ENCODE measurements at regions of chr10 and their contacts with region 1.

Region 1: DNA sequence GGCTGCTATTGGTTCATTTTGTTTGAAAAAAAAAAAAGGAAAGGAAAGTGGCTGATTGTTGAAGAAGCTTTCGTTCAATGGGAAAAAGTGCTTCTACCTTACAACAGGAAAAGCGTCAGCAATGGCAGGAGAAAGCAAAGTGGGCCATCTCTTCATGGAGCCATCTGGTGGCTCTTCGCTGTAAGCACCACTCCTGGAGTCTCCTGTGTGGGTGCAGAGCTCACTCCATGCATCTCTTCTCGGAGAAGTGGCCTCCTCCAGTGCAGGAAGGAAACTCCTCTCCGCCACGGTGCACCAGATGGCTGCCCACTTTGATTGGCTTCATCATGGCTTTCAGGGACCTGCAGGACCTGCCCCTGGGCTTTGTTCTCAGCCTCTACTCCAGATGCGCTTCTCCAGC is 250.9 kb downstream of the PTEN start:
- DNase-seq: no peak
- H3K4me3 Mint-ChIP-seq: no peak overlapping the region
- H3K27ac Mint-ChIP-seq: no peak overlapping the region
- H3K4me1 Mint-ChIP-seq: peaks cover 32% of the 10 kb centered on the region
- H3K27me3 Mint-ChIP-seq: peaks cover 7% of the 10 kb centered on the region

Region 2: GRCh38 chr10:88064608-88065382 is 49.6 kb before region 1 on chr10:
- intact Hi-C with region 1: loop called (anchors 1 kb)
- DNase-seq: no peak
- H3K4me3 Mint-ChIP-seq: no peak overlapping the region
- H3K27ac Mint-ChIP-seq: peak overlapping the region; percentile 18
- H3K4me1 Mint-ChIP-seq: peaks cover 39% of the 10 kb centered on the region
- H3K27me3 Mint-ChIP-seq: peaks cover 11% of the 10 kb centered on the region

Region 3: GRCh38 chr10:88091490-88092105 is 22.8 kb before region 1 on chr10:
- intact Hi-C with region 1: loop called (anchors 1 kb)
- DNase-seq: peak; percentile 71
- H3K4me3 Mint-ChIP-seq: no peak overlapping the region
- H3K27ac Mint-ChIP-seq: no peak overlapping the region
- H3K4me1 Mint-ChIP-seq: peaks cover 34% of the 10 kb centered on the region
- H3K27me3 Mint-ChIP-seq: peaks cover 56% of the 10 kb centered on the region

Region 4: GRCh38 chr10:88138319-88138848 is 24.0 kb after region 1 on chr10:
- intact Hi-C with region 1: loop called (anchors 1 kb)
- DNase-seq: no peak
- H3K4me3 Mint-ChIP-seq: no peak overlapping the region
- H3K27ac Mint-ChIP-seq: no peak overlapping the region
- H3K4me1 Mint-ChIP-seq: peaks cover 24% of the 10 kb centered on the region
- H3K27me3 Mint-ChIP-seq: peaks cover 22% of the 10 kb centered on the region

Region 5: GRCh38 chr10:88152720-88153119 is 38.4 kb after region 1 on chr10:
- intact Hi-C with region 1: loop called (anchors 1 kb)
- DNase-seq: peak; percentile 39
- H3K4me3 Mint-ChIP-seq: no peak overlapping the region
- H3K27ac Mint-ChIP-seq: peak overlapping the region; percentile 89
- H3K4me1 Mint-ChIP-seq: peaks cover 40% of the 10 kb centered on the region
- H3K27me3 Mint-ChIP-seq: peaks cover 7% of the 10 kb centered on the region

Region 6: GRCh38 chr10:88389456-88389855 is 275.1 kb after region 1 on chr10:
- intact Hi-C with region 1: loop called (anchors 1 kb)
- DNase-seq: no peak
- H3K4me3 Mint-ChIP-seq: no peak overlapping the region
- H3K27ac Mint-ChIP-seq: no peak overlapping the region
- H3K4me1 Mint-ChIP-seq: peaks cover 29% of the 10 kb centered on the region
- H3K27me3 Mint-ChIP-seq: no peaks in the 10 kb centered on the region

Region 7: GRCh38 chr10:88553116-88553752 is 438.9 kb after region 1 on chr10:
- intact Hi-C with region 1: loop called (anchors 10 kb)
- DNase-seq: peak; percentile 16
- H3K4me3 Mint-ChIP-seq: no peak overlapping the region
- H3K27ac Mint-ChIP-seq: no peak overlapping the region
- H3K4me1 Mint-ChIP-seq: peaks cover 8% of the 10 kb centered on the region
- H3K27me3 Mint-ChIP-seq: peaks cover 6% of the 10 kb centered on the region

Measured in activated T-helper 2 cell treated with anti-CD3 and anti-CD28 coated beads, Interferon-gamma antibody, Interleukin-2, Interleukin-4, amounts not matched to agents 10 μg/mL and 5 μg/mL and 100 μg/mL, durations not matched to agents 14 hours and 24 hours and 36 hours (primary cell).